ENCODE measurements at regions of chr1 and their contacts with region 1.

Region 1: GRCh38 chr1:10514490-10515235 is 39.9 kb downstream of the PEX14 start:
- DNase-seq: no peak
- H3K4me3 ChIP-seq: no peak overlapping the region
- H3K27ac ChIP-seq: no peak overlapping the region
- H3K4me1 ChIP-seq: peaks cover 52% of the 10 kb centered on the region
- H3K27me3 ChIP-seq: no peaks in the 10 kb centered on the region
- CTCF ChIP-seq: peak in 1 of 3 experiments; percentile 26
- POLR2A ChIP-seq: no peak

Region 2: GRCh38 chr1:10657088-10657847 is 142.6 kb after region 1 on chr1:
- intact Hi-C with region 1: no loop called
- DNase-seq: no peak
- H3K4me3 ChIP-seq: no peak overlapping the region
- H3K27ac ChIP-seq: no peak overlapping the region
- H3K4me1 ChIP-seq: no peaks in the 10 kb centered on the region
- H3K27me3 ChIP-seq: no peaks in the 10 kb centered on the region
- CTCF ChIP-seq: no peak
- POLR2A ChIP-seq: no peak

Region 3: GRCh38 chr1:10867138-10867721 is 352.6 kb after region 1 on chr1:
- intact Hi-C with region 1: loop called (anchors 2 kb)
- DNase-seq: no peak
- H3K4me3 ChIP-seq: peak overlapping the region; percentile 37 to 52
- H3K27ac ChIP-seq: no peak overlapping the region
- H3K4me1 ChIP-seq: peaks cover 13% of the 10 kb centered on the region
- H3K27me3 ChIP-seq: no peaks in the 10 kb centered on the region
- CTCF ChIP-seq: peak; percentile 27 to 72 (median 39)
- POLR2A ChIP-seq: no peak

Measured in vagina (tissue), 2 donors.